ENCODE measurements at regions of chr13 and their contacts with region 1.

Region 1: DNA sequence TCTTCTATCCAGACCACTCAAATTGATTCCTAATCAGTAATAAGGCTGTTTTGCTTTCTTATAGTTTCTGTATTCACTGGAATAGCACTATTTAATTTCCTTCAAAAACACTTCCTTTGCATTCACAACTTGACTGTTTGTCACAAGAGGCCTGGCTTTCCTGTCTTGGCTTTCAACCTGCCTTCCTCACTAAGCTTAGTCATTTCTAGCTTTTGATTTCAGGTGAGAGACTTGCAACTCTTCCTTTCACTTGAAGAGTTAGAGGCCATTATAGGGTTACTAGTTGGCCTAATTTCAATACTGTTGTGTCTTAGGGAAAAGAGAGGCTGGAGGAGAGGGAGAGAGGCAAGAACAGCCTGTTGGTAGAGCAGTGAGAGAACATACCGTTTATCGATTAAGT is 47.0 kb downstream of the SACS start:
- DNase-seq: no peak
- H3K4me3 ChIP-seq: no peak overlapping the region
- H3K27me3 ChIP-seq: no peaks in the 10 kb centered on the region
- CTCF ChIP-seq: no peak

Region 2: GRCh38 chr13:22893204-22893603 is 493.3 kb before region 1 on chr13:
- CTCF ChIA-PET with region 1: no interaction called
- POLR2A ChIA-PET with region 1: no interaction called
- DNase-seq: no peak
- H3K4me3 ChIP-seq: no peak overlapping the region
- H3K27me3 ChIP-seq: no peaks in the 10 kb centered on the region
- CTCF ChIP-seq: no peak

Region 3: DNA sequence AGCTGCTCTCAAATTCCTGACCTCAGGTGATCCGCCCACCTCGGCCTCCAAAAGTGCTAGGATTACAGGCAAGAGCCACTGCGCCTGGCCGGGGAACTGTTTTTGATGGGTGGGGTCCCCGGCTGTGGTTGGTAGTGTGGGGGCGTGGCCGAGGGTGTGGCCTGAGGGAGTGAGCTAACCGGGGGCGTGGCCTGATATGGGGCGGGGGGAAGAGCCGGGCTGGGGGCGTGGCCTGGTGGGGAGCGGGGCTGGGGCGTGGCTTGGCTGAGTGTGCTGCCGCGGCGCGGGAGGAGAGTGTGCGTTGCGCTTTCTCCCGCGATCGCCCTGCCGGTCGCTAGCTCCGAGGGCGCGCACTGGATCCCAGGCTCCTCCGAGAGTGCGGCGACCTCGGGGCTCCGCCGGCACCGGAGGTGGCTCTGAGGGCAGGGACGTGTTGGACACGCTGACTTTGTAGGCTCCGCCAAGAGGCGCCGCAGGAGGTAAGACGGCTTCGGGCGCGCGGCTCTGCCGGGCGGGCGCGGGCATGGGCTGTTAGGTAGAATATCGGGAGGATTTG is 774.0 kb after region 1 on chr13 and contains the start of gene SPATA13:
- CTCF ChIA-PET with region 1: no interaction called
- POLR2A ChIA-PET with region 1: interaction called, 11 read pairs
- DNase-seq: no peak
- H3K4me3 ChIP-seq: peak within 1 kb of the TSS; percentile 89
- H3K27me3 ChIP-seq: no peaks in the 10 kb centered on the region
- CTCF ChIP-seq: no peak
- polyA plus RNA-seq, gene SPATA13: 3.0 and 3.6 TPM in 2 replicates